ENCODE measurements at regions of chr12 and their contacts with region 1.

Region 1: GRCh38 chr12:26119391-26119981 is 5.4 kb downstream of the BHLHE41 start:
- DNase-seq: no peak
- ATAC-seq: no peak
- H3K4me3 Mint-ChIP-seq: peak overlapping the region; percentile 49
- H3K27ac Mint-ChIP-seq: peak overlapping the region; percentile 39
- H3K4me1 Mint-ChIP-seq: peaks cover 82% of the 10 kb centered on the region
- H3K27me3 Mint-ChIP-seq: no peaks in the 10 kb centered on the region
- CTCF ChIP-seq: no peak

Region 2: DNA sequence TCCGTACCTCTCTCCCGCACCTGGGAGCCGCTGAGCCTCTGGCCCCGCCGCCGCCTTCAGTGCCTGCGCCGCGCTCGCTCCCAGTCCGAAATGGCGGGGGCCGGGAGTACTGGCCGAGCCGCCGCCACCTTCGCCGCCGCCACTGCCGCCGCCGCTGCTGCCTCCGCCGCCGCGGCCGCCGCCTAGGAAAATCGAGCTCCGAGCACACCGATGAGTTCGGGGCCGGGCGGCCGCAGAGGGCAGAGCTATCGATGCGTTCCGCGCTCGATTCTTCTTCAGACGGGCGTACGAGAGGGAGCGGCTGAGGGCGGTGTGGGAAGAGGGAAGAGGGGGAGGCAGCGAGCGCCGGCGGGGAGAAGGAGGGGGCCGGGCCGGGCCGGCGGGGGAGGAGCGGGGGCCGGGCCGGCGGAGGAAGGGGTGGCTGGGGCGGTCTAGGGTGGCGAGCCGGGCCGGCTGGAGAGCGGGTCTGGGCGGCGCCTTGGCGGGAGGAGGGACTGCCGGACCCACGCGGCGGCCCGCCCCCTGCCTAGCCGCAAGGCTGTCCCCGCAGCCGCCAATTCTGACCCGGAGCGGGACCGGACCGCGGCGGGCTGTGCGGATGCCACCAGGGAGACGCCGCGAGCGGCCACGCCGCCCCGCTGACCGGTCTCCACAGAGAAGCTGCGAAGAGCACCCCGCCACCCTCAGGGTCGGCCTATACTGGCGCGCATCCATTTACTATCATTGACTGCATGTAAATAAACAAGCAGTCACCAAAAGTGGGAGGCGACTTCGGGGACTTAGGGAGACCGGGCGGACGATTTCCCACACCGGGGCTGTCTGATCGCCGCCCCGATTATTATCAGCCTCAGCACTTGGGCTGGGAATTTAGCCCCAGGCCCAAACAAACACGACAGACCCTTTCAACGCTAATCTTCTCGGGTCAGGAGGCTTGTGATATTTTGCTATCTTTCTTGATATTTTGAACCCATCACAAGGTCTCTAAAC is 868.4 kb before region 1 on chr12 and contains the start of gene KRAS:
- CTCF ChIA-PET with region 1: interaction called, 3 read pairs
- POLR2A ChIA-PET with region 1: no interaction called
- intact Hi-C with region 1: loop called (anchors 5 kb)
- DNase-seq: peak; percentile 88
- ATAC-seq: peak; percentile 85
- H3K4me3 Mint-ChIP-seq: peak within 1 kb of the TSS; percentile 95
- H3K27ac Mint-ChIP-seq: peak within 1 kb of the TSS; percentile 95
- H3K4me1 Mint-ChIP-seq: peaks cover 48% of the 10 kb centered on the region
- H3K27me3 Mint-ChIP-seq: no peaks in the 10 kb centered on the region
- CTCF ChIP-seq: no peak
- total RNA-seq, gene KRAS: 43.3 and 45.8 TPM in 2 replicates

Region 3: DNA sequence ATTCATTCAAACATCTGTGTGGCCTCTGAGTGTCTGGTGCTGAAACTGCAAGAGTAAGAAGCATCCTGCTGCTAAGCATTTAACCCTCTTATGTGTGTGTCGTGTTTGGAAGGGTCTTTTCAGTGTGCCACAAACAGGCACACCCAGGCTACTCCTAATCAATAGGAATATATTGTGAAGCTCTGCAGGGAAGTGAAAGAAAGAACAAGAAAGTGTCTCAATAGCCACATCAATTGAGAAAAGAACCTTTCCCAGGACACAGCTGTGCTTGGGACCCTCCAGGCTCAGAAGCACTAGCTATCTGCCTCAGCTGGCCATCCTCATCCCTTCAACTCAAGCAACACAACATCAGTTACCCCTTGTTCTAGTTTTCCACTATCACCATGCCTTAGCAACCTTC is 855.4 kb before region 1 on chr12:
- CTCF ChIA-PET with region 1: no interaction called
- POLR2A ChIA-PET with region 1: no interaction called
- intact Hi-C with region 1: no loop called
- DNase-seq: no peak
- ATAC-seq: no peak
- H3K4me3 Mint-ChIP-seq: no peak overlapping the region
- H3K27ac Mint-ChIP-seq: no peak overlapping the region
- H3K4me1 Mint-ChIP-seq: peaks cover 14% of the 10 kb centered on the region
- H3K27me3 Mint-ChIP-seq: no peaks in the 10 kb centered on the region
- CTCF ChIP-seq: no peak

Region 4: GRCh38 chr12:26195641-26196420 is 76.3 kb after region 1 on chr12:
- CTCF ChIA-PET with region 1: interaction called, 8 read pairs
- POLR2A ChIA-PET with region 1: interaction called, 34 read pairs
- intact Hi-C with region 1: loop called (anchors 2 kb)
- DNase-seq: peak; percentile 46
- ATAC-seq: peak; percentile 82
- H3K4me3 Mint-ChIP-seq: peak overlapping the region; percentile 94
- H3K27ac Mint-ChIP-seq: peak overlapping the region; percentile 87
- H3K4me1 Mint-ChIP-seq: peaks cover 13% of the 10 kb centered on the region
- H3K27me3 Mint-ChIP-seq: no peaks in the 10 kb centered on the region
- CTCF ChIP-seq: no peak

Region 5: GRCh38 chr12:26298785-26299621 is 179.5 kb after region 1 on chr12:
- CTCF ChIA-PET with region 1: interaction called, 3 read pairs
- POLR2A ChIA-PET with region 1: interaction called, 12 read pairs
- intact Hi-C with region 1: loop called (anchors 1 kb)
- DNase-seq: no peak
- ATAC-seq: peak; percentile 98
- H3K4me3 Mint-ChIP-seq: peak overlapping the region; percentile 63
- H3K27ac Mint-ChIP-seq: peak overlapping the region; percentile 80
- H3K4me1 Mint-ChIP-seq: peaks cover 34% of the 10 kb centered on the region
- H3K27me3 Mint-ChIP-seq: no peaks in the 10 kb centered on the region
- CTCF ChIP-seq: no peak

Region 6: GRCh38 chr12:26402648-26403047 is 283.2 kb after region 1 on chr12:
- CTCF ChIA-PET with region 1: interaction called, 23 read pairs
- POLR2A ChIA-PET with region 1: interaction called, 3 read pairs
- intact Hi-C with region 1: loop called (anchors 1 kb)
- DNase-seq: no peak
- ATAC-seq: peak; percentile 54
- H3K4me3 Mint-ChIP-seq: no peak overlapping the region
- H3K27ac Mint-ChIP-seq: no peak overlapping the region
- H3K4me1 Mint-ChIP-seq: no peaks in the 10 kb centered on the region
- H3K27me3 Mint-ChIP-seq: no peaks in the 10 kb centered on the region
- CTCF ChIP-seq: no peak

Region 7: GRCh38 chr12:26614020-26614616 is 494.6 kb after region 1 on chr12:
- CTCF ChIA-PET with region 1: interaction called, 29 read pairs
- POLR2A ChIA-PET with region 1: interaction called, 4 read pairs
- intact Hi-C with region 1: loop called (anchors 1 kb)
- DNase-seq: no peak
- ATAC-seq: peak; percentile 45
- H3K4me3 Mint-ChIP-seq: no peak overlapping the region
- H3K27ac Mint-ChIP-seq: no peak overlapping the region
- H3K4me1 Mint-ChIP-seq: no peaks in the 10 kb centered on the region
- H3K27me3 Mint-ChIP-seq: no peaks in the 10 kb centered on the region
- CTCF ChIP-seq: no peak

Region 8: DNA sequence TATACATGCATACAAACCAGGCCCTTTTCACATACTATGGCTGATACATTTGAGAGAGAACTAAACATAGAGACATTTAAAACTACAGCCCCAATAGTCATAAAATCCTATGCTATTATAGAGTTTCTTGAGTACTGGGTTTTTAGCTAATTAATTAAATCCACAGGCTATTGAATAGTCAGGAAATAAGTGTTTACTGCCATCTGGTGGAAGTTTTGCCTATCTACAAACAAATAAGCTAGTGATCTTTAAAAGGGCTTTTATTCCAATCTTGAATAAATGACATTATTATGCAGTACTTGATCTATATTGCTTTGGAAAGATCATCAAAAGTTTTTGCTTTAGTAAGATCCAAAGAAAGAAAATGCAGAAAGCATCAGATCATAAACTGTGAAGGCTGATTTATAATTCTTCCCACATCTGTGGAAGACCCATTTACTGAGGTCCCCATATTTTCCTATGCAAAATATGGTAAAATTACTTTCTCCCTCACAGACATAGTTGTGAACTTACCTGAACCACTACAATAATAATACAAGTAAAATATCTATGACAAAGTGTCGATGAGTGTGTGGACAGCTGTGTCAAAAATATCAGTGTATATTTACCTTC is 582.2 kb after region 1 on chr12:
- CTCF ChIA-PET with region 1: interaction called, 4 read pairs
- POLR2A ChIA-PET with region 1: no interaction called
- intact Hi-C with region 1: loop called (anchors 5 kb)
- DNase-seq: no peak
- ATAC-seq: no peak
- H3K4me3 Mint-ChIP-seq: no peak overlapping the region
- H3K27ac Mint-ChIP-seq: no peak overlapping the region
- H3K4me1 Mint-ChIP-seq: peaks cover 4% of the 10 kb centered on the region
- H3K27me3 Mint-ChIP-seq: no peaks in the 10 kb centered on the region
- CTCF ChIP-seq: peak; percentile 58

Measured in activated B cell treated with CpG ODN at 0.5 μM for 24 hours (primary cell).